RWPE1 (cell line): ENCODE measurements at regions of chr12 and their contacts with region 1.

Region 1: DNA sequence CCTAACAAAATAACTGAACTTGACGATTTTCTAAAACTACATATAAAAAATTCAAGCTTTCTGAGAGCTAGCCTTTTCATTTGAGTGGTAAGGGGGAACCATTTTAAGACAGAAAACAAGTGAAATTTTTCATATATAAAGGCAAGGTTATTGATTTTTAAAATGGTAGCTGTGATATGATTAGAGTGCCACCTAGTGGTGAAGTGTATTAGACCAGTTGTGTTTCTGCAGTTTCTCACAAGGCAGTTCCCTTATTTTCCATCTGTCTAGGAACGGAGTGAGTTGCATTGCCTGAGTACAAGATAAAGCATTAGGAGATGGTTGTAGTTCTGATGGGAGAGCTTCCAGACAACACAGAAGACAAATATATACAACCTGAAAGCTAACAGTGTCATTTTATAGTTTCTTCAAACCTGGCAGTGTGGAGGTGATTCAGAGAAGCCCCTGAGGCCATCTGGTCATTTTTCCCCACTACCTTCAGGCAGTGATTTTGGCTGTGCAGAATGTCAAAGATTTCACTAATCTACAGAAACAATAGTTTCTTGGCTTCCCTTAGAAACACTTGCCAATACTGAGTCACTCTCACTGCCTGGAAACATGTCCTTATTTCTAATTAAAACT is 180.8 kb downstream of the C12orf50 start:
- DNase-seq: peak; percentile 22
- H3K27ac ChIP-seq: no peak overlapping the region
- CTCF ChIP-seq: peak; percentile 84

Region 2: DNA sequence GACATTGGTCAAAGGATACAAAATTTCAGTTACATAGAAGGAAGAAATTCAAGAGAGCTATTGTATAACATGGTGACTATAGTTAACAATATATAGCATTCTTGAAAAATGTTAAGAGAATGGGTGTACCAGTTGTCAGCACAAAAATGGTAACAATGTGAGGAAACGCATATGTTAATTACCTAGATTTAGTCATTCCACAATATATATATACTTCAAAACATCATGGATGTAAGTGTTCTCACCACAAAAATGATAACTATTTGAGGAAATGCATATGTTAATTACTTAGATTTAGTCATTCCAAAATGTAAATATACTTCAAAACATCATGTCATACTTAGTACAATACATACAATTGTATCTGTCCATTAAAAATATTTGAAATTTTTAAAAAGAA is 1051.8 kb before region 1 on chr12:
- CTCF ChIA-PET with region 1: interaction called, 12 read pairs
- POLR2A ChIA-PET with region 1: no interaction called
- DNase-seq: no peak
- H3K27ac ChIP-seq: no peak overlapping the region
- CTCF ChIP-seq: no peak

Region 3: DNA sequence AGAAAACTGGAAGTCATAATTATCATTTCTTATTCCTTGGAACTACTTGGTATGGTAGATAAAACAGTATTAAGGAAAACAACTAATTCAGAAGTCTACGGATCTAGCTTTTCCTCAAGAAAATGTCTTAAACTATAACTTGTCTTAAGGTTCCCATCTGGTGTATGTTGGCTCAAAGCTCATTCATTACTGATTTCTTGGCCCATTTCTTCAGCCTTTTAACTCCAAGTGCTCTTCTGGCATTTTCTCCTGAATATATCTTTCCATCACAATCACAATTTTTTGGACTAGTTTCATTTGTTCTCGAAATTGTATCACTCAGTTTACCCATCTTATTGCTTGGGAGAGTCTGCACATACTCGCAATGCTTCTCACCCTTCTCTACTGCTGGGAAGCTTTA is 30.8 kb after region 1 on chr12:
- CTCF ChIA-PET with region 1: no interaction called
- POLR2A ChIA-PET with region 1: no interaction called
- DNase-seq: no peak
- H3K27ac ChIP-seq: no peak overlapping the region
- CTCF ChIP-seq: no peak

Region 4: GRCh38 chr12:87901457-87901856 is 53.1 kb after region 1 on chr12:
- CTCF ChIA-PET with region 1: no interaction called
- POLR2A ChIA-PET with region 1: no interaction called
- DNase-seq: no peak
- H3K27ac ChIP-seq: no peak overlapping the region
- CTCF ChIP-seq: no peak